ENCODE measurements at regions of chr17 and their contacts with region 1.

Region 1: GRCh38 chr17:82351716-82352488 is 7.1 kb upstream of the TEX19 start:
- DNase-seq: no peak
- H3K4me3 ChIP-seq: no peak overlapping the region
- H3K27me3 ChIP-seq: peaks cover 4% of the 10 kb centered on the region
- CTCF ChIP-seq: peak; percentile 95

Region 2: GRCh38 chr17:82408938-82409318 is 57.0 kb after region 1 on chr17:
- CTCF ChIA-PET with region 1: interaction called, 36 read pairs
- POLR2A ChIA-PET with region 1: no interaction called
- DNase-seq: no peak
- H3K4me3 ChIP-seq: no peak overlapping the region
- H3K27me3 ChIP-seq: no peaks in the 10 kb centered on the region
- CTCF ChIP-seq: no peak

Region 3: DNA sequence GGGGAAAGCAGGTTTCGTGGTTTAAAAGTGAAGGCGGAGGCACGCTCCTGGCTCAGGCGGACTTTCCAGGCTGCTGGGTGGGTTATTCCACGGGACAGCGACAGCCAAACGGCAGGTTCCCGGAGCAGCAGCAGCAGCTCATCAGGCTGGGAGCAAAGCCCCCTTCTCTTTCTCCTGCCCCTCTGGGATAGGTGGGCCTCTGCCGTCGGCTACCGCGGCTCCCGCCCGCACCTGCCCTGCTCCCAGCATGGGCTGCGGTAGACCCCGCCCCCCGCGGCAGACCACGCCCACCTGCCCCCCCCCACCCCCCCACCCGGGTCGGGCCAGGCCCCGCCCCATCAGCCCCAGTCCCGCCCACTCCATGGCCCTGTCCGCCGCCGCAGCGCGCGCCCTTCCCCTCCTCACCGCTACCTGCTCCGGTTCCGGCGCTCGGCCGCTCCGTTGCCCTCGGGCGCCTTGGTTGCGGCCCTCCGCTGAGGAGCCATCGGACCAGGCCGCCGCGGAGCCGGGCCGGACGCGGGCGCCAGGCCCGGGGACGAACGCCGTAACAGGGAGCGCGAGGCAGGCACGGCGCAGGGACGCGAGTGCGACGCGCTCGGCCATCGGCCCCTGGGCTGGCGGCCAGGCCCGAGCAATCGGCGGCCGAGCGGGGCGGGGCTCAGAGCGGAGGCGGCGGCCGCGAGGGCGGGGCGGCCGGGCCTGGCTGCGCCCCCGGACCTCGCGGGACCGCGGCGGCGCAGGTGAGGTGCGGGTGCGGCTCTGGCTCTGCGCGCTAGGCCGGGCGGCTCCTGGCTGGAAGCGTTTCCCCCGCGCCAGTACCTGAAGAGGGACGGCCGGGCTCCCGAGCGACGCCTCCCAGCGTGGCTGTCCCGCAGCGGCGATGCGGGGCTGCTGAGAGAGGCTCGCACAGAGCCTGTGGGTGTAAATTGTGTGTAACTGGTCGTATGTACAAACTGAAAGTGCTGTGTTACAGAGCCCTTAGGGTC is 66.4 kb after region 1 on chr17 and contains the starts of genes HEXD and OGFOD3:
- CTCF ChIA-PET with region 1: interaction called, 36 read pairs
- POLR2A ChIA-PET with region 1: no interaction called
- DNase-seq: no peak
- H3K4me3 ChIP-seq: peak within 1 kb of the TSS; percentile 88
- H3K27me3 ChIP-seq: no peaks in the 10 kb centered on the region
- CTCF ChIP-seq: no peak
- polyA plus RNA-seq, gene HEXD: 8.5 and 8.9 TPM in 2 replicates
- polyA plus RNA-seq, gene OGFOD3: 21.3 and 37.9 TPM in 2 replicates

Region 4: DNA sequence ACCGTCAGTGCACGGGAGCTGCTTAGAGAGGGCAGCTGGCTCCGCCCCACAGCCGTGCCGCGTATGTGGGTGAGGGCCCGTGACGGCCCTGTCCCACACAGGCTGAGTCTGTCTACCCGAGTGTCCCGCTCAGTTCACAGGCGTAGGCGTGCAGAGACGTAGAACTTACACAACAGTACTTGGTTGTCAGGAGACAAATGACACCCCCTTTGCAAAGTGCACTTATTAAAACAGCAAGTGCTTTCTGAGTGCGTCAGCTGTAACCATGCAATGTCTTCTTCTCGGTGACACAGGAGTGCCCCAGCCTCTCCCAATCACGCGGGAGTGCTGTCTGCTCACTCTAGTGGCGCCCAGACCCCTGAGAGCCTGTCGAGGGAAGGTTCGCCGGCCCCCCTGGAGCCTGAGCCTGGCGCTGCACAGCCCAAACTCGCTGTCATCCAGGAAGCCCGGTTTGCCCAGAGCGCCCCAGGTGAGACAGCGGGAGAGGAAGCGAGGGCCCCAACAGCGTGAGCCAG is 231.9 kb after region 1 on chr17:
- CTCF ChIA-PET with region 1: no interaction called
- POLR2A ChIA-PET with region 1: no interaction called
- DNase-seq: no peak
- H3K4me3 ChIP-seq: no peak overlapping the region
- H3K27me3 ChIP-seq: no peaks in the 10 kb centered on the region
- CTCF ChIP-seq: no peak

Measured in BJ (cell line).